Posterior vena cava (tissue), 2 donors: ENCODE measurements at regions of chr2 and their contacts with region 1.

Region 1: DNA sequence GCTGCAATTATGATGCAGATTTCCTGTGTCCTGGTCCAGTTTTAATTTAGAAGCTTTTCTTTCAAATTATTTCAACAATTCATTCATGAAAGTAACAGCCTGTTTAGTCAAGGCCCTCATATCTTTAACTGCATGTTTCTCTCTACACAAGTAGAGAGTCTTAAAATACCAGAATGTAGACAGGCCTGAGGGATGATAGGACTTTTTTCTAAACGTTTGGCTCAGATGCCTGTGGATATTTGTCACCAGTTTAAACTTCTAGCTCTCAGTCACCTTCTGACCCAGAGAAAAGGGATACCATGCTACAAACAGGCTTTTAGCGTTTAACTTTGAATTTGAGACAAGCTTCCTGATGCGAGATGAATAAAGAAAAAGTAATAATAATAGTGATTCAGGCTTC is 15.7 kb downstream of the COL5A2 start:
- DNase-seq: no peak

Region 2: DNA sequence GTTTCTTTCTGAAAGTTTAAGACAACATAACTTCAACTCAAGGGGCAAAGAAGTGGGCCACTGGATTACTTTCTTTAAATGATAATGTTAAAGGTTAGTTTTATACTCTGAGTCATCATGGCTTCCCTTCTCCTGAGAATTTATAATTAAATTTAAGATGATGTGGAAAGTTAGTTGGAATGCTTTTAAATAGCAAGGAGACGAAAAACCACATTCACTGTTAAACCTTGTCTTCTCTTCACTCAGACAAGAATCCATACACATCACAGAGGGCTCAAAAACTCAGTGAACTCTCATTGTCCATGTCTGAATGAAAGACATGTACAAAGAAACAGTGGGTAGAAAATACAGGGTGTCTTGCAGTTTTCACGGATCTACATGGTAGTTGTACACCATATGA is 49.9 kb before region 1 on chr2:
- intact Hi-C with region 1: loop called in 1 of 2 experiments (anchors 1 kb)
- DNase-seq: no peak